A549 (cell line): ENCODE measurements at regions of chr4 and their contacts with region 1.

Region 1: DNA sequence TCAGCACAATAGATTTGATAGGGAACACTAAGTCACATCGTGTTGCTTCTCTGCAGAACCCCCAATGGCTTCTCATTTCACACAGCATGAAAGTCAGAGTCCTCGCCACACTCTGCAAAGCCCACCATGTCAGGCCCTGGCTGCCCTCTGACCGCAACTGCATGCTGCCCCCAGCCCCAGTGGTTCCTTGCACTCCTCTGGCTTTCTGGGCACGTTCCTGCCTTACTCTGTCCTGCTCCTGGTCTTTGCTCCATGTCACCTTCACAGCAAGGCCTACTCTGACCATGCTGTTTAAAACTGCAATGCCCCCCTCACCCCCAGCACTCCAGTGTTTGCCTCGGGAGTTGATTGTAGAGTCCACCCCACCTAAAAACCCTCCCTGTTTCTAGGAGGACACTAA is 78.1 kb downstream of the EVC start:
- DNase-seq: no peak
- ATAC-seq: no peak
- H3K4me3 ChIP-seq: no peak overlapping the region
- H3K27ac ChIP-seq: no peak overlapping the region
- H3K4me1 ChIP-seq: peaks cover 3% of the 10 kb centered on the region; the same call in 1 of the 3 replicates
- CTCF ChIP-seq: no peak
- EP300 ChIP-seq: no peak
- POLR2A ChIP-seq: no peak
- RAD21 ChIP-seq: no peak

Region 2: GRCh38 chr4:5708449-5709206 is 80.5 kb before region 1 on chr4 and contains the start of gene EVC2:
- CTCF ChIA-PET with region 1: interaction called, 13 read pairs
- POLR2A ChIA-PET with region 1: interaction called, 3 read pairs
- DNase-seq: peak; percentile 13 to 27
- ATAC-seq: peak in 1 of 2 experiments; percentile 62; a peak in 3 of 6 replicates
- H3K4me3 ChIP-seq: peak within 1 kb of the TSS; percentile 83
- H3K27ac ChIP-seq: peak within 1 kb of the TSS; percentile 92 to 97
- H3K4me1 ChIP-seq: peaks cover 38% of the 10 kb centered on the region
- CTCF ChIP-seq: no peak
- EP300 ChIP-seq: no peak
- POLR2A ChIP-seq: peak; percentile 54; the same call in 1 of the 2 replicates
- RAD21 ChIP-seq: no peak
- polyA plus RNA-seq, gene EVC2: 0.96 and 1.5 TPM in 2 replicates

Region 3: GRCh38 chr4:5812506-5813229 is 23.5 kb after region 1 on chr4:
- CTCF ChIA-PET with region 1: interaction called, 12 read pairs
- POLR2A ChIA-PET with region 1: no interaction called
- DNase-seq: peak; percentile 36 to 67
- ATAC-seq: peak; percentile 87 to 92
- H3K4me3 ChIP-seq: no peak overlapping the region
- H3K27ac ChIP-seq: no peak overlapping the region
- H3K4me1 ChIP-seq: no peaks in the 10 kb centered on the region
- CTCF ChIP-seq: peak; percentile 58
- EP300 ChIP-seq: no peak
- POLR2A ChIP-seq: no peak
- RAD21 ChIP-seq: peak; percentile 57 to 78; a peak in 4 of 5 replicates

Region 4: GRCh38 chr4:5908876-5909430 is 119.8 kb after region 1 on chr4:
- CTCF ChIA-PET with region 1: no interaction called
- POLR2A ChIA-PET with region 1: no interaction called
- DNase-seq: no peak
- ATAC-seq: no peak
- H3K4me3 ChIP-seq: no peak overlapping the region
- H3K27ac ChIP-seq: no peak overlapping the region
- H3K4me1 ChIP-seq: no peaks in the 10 kb centered on the region
- CTCF ChIP-seq: no peak
- EP300 ChIP-seq: no peak
- POLR2A ChIP-seq: no peak
- RAD21 ChIP-seq: no peak

Region 5: GRCh38 chr4:6049985-6050384 is 260.8 kb after region 1 on chr4:
- CTCF ChIA-PET with region 1: no interaction called
- POLR2A ChIA-PET with region 1: no interaction called
- DNase-seq: no peak
- ATAC-seq: no peak
- H3K4me3 ChIP-seq: no peak overlapping the region
- H3K27ac ChIP-seq: no peak overlapping the region
- H3K4me1 ChIP-seq: 0 out of 3 replicates have a peak, but pooled peaks cover 3% of the 10 kb centered on the region
- CTCF ChIP-seq: no peak
- EP300 ChIP-seq: no peak
- POLR2A ChIP-seq: no peak
- RAD21 ChIP-seq: no peak